Transverse colon (tissue), 4 donors: ENCODE measurements at regions of chr2 and their contacts with region 1.

Region 1: DNA sequence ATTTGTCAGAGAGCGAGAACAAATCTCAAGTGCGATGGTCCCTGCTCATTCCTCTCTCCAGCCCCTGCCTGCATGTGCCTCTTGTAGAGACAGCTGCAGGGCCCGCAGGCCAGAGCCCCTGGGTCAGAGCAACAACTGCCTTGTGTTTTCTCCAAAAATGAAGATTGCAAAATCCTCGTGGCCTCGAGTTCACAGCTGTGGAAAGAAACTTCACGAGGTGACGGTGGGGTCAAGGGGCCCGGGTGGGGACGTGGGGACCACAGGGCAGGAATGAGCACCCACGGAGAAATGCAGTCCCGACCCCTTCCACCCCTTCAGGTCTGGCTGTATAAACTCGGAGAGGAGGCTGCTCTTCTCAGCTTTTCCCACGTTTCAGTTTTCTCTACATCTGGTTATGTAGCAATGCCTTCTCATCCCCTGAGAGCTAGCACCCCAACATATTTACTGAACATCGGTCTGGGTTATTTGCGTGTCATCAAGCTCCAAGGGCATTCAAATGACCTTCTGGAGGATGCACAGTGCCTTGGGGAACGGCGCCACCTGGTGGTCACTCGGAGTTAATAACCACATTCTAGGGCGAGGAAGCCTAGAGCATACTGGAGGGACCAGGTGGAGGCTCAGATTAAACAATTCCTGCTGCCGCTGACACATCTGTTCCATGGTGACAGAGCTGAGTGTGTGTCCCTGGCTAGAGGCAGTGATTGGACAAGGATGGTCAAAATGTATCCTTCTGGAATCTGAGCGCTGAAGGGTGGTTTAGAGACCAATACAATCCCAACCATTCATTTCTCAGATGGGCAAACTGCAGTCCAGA is 91.4 kb upstream of the CYRIA start:
- DNase-seq: peak; percentile 82
- H3K4me3 ChIP-seq: no peak overlapping the region
- H3K27ac ChIP-seq: no peak overlapping the region
- H3K4me1 ChIP-seq: no peaks in the 10 kb centered on the region
- H3K27me3 ChIP-seq: no peaks in the 10 kb centered on the region
- CTCF ChIP-seq: peak; percentile 86 to 90 (median 87)
- EP300 ChIP-seq: no peak
- POLR2A ChIP-seq: no peak

Region 2: GRCh38 chr2:15636972-15637785 is 1119.9 kb before region 1 on chr2:
- in situ Hi-C with region 1: loop called in 3 of 4 experiments (anchors 25 kb)
- intact Hi-C with region 1: no loop called
- DNase-seq: peak; percentile 60
- H3K4me3 ChIP-seq: no peak overlapping the region
- H3K27ac ChIP-seq: no peak overlapping the region
- H3K4me1 ChIP-seq: peaks cover 0 to 8% (median 0%) of the 10 kb centered on the region in 4 donors
- H3K27me3 ChIP-seq: no peaks in the 10 kb centered on the region
- CTCF ChIP-seq: peak; percentile 77 to 89 (median 80)
- EP300 ChIP-seq: no peak
- POLR2A ChIP-seq: no peak

Region 3: DNA sequence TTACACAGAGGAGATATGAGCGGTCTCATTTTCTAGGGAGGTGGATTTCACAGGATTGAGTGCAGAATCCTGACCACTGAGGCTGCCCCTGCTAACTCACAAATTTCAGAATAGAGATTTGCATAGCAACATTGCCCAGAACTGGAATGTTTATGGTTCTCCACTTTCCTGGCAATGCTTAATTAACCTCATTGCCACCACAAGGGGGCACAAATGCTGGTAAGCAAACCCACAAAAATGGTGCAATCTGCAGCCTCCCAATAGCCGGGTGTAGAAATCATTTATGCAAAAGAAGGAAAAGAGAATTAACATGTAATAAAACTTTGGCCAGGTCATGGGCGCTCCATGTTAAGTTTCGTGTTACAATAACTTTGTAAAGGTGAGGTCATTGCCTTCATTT is 203.8 kb before region 1 on chr2:
- in situ Hi-C with region 1: loop called in 1 of 4 experiments (anchors 10 kb)
- intact Hi-C with region 1: no loop called
- DNase-seq: peak; percentile 12
- H3K4me3 ChIP-seq: no peak overlapping the region
- H3K27ac ChIP-seq: no peak overlapping the region
- H3K4me1 ChIP-seq: no peaks in the 10 kb centered on the region
- H3K27me3 ChIP-seq: no peaks in the 10 kb centered on the region
- CTCF ChIP-seq: peak; percentile 35 to 52 (median 40)
- EP300 ChIP-seq: no peak
- POLR2A ChIP-seq: no peak

Region 4: GRCh38 chr2:16625201-16625729 is 131.8 kb before region 1 on chr2:
- in situ Hi-C with region 1: loop called in 1 of 4 experiments (anchors 10 kb)
- intact Hi-C with region 1: no loop called
- DNase-seq: peak; percentile 26
- H3K4me3 ChIP-seq: no peak overlapping the region
- H3K27ac ChIP-seq: peak overlapping the region; percentile 58 to 70 (median 64)
- H3K4me1 ChIP-seq: peaks cover 0 to 41% (median 10%) of the 10 kb centered on the region in 4 donors
- H3K27me3 ChIP-seq: no peaks in the 10 kb centered on the region
- CTCF ChIP-seq: no peak
- EP300 ChIP-seq: no peak
- POLR2A ChIP-seq: no peak

Region 5: GRCh38 chr2:16713011-16713423 is 44.0 kb before region 1 on chr2:
- in situ Hi-C with region 1: no loop called
- intact Hi-C with region 1: no loop called
- DNase-seq: no peak
- H3K4me3 ChIP-seq: no peak overlapping the region
- H3K27ac ChIP-seq: no peak overlapping the region
- H3K4me1 ChIP-seq: no peaks in the 10 kb centered on the region
- H3K27me3 ChIP-seq: no peaks in the 10 kb centered on the region
- CTCF ChIP-seq: no peak
- EP300 ChIP-seq: no peak
- POLR2A ChIP-seq: no peak

Region 6: GRCh38 chr2:17658251-17658843 is 901.3 kb after region 1 on chr2:
- in situ Hi-C with region 1: loop called in 1 of 4 experiments (anchors 25 kb)
- intact Hi-C with region 1: no loop called
- DNase-seq: no peak
- H3K4me3 ChIP-seq: no peak overlapping the region
- H3K27ac ChIP-seq: no peak overlapping the region
- H3K4me1 ChIP-seq: no peaks in the 10 kb centered on the region
- H3K27me3 ChIP-seq: no peaks in the 10 kb centered on the region
- CTCF ChIP-seq: no peak
- EP300 ChIP-seq: no peak
- POLR2A ChIP-seq: no peak